CD4-positive, alpha-beta memory T cell (primary cell): ENCODE measurements at regions of chr1 and their contacts with region 1.

Region 1: DNA sequence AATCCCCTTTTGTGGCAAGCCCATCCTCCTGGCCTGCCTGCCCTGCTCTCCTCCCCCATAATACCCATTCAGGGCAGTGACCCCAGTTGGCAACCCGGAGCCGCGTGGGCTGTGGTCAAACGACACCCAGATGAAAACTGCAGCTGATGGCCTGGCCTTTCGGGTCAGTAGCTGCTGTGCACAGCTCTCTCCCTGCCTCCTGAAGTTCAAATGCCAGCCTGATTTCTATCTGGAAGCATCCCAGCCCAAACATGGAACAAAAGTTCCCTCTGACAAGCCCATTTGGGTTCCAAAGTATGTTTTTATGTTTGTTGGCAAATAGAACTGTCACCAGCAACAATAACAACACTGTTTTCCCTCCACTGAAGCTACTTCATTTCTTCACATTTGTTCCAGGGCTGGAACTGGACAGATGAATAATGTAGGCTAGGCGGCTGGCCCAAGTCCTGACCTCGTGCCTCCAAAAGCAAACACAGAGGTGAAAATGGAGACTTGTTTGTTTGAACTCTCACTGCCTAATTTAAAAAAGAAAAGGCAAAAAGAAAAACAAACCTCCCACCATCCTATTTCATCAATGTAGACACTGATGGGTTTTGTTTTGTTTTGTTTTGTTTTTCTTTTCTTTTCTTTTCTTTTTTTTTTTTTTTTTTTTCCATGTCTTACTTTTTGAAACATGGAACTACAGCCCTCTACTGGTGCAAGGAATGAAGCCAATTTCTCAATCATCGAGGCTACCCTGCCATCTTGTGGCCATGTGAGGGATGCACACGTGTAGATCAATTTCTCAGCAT is 179.0 kb downstream of the ADSS2 start:
- DNase-seq: peak; percentile 65 to 76 (median 74)
- H3K4me3 ChIP-seq: no peak overlapping the region
- H3K4me3 Mint-ChIP-seq: no peak overlapping the region
- H3K27ac ChIP-seq: no peak overlapping the region
- H3K27ac Mint-ChIP-seq: no peak overlapping the region
- H3K4me1 ChIP-seq: no peaks in the 10 kb centered on the region
- H3K4me1 Mint-ChIP-seq: peaks cover 0 to 3% (median 1%) of the 10 kb centered on the region in 4 donors
- H3K27me3 ChIP-seq: no peaks in the 10 kb centered on the region
- H3K27me3 Mint-ChIP-seq: peaks cover 0 to 2% of the 10 kb centered on the region in 2 donors

Region 2: GRCh38 chr1:243343970-243344937 is 928.4 kb before region 1 on chr1:
- CTCF ChIA-PET with region 1: interaction called, 65 read pairs
- POLR2A ChIA-PET with region 1: interaction called, 3 read pairs
- intact Hi-C with region 1: loop called (anchors 1 kb)
- DNase-seq: peak in 4 of 5 donors; percentile 47 to 52 (median 50)
- H3K4me3 ChIP-seq: no peak overlapping the region
- H3K4me3 Mint-ChIP-seq: no peak overlapping the region
- H3K27ac ChIP-seq: no peak overlapping the region
- H3K27ac Mint-ChIP-seq: no peak overlapping the region
- H3K4me1 ChIP-seq: no peaks in the 10 kb centered on the region
- H3K4me1 Mint-ChIP-seq: peaks cover 0 to 4% (median 3%) of the 10 kb centered on the region in 4 donors
- H3K27me3 ChIP-seq: no peaks in the 10 kb centered on the region
- H3K27me3 Mint-ChIP-seq: no peaks in the 10 kb centered on the region

Region 3: DNA sequence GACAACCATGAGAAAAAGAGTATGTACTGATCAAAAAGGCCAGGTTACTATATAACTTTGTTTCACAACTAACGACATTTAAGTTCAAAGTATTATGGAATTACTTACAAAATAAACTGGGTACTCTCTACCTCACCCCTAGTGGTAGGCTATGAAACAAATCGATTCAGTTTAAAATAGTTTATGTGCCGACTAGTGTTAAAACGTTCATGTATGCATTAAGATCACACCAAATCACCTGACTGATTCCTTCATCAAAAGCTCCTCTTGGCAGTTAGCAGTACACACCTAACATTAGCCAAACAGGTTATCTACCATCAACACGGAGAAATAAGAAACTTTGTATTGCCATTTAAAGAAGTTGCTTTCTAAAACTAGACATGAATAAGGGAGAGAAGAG is 559.7 kb before region 1 on chr1:
- CTCF ChIA-PET with region 1: interaction called, 15 read pairs
- POLR2A ChIA-PET with region 1: no interaction called
- intact Hi-C with region 1: loop called (anchors 1 kb)
- DNase-seq: no peak
- H3K4me3 ChIP-seq: no peak overlapping the region
- H3K4me3 Mint-ChIP-seq: no peak overlapping the region
- H3K27ac ChIP-seq: no peak overlapping the region
- H3K27ac Mint-ChIP-seq: no peak overlapping the region
- H3K4me1 ChIP-seq: peaks cover 7% of the 10 kb centered on the region
- H3K4me1 Mint-ChIP-seq: peaks cover 38 to 57% (median 48%) of the 10 kb centered on the region in 4 donors
- H3K27me3 ChIP-seq: no peaks in the 10 kb centered on the region
- H3K27me3 Mint-ChIP-seq: no peaks in the 10 kb centered on the region

Region 4: GRCh38 chr1:243842978-243843511 is 429.6 kb before region 1 on chr1:
- CTCF ChIA-PET with region 1: no interaction called
- POLR2A ChIA-PET with region 1: no interaction called
- intact Hi-C with region 1: loop called (anchors 5 kb)
- DNase-seq: peak in 2 of 5 donors; percentile 20 to 61
- H3K4me3 ChIP-seq: no peak overlapping the region
- H3K4me3 Mint-ChIP-seq: peak overlapping the region; percentile 56 to 85 (median 74)
- H3K27ac ChIP-seq: peak overlapping the region; percentile 26
- H3K27ac Mint-ChIP-seq: peak overlapping the region; percentile 67 to 97 (median 87)
- H3K4me1 ChIP-seq: peaks cover 74% of the 10 kb centered on the region
- H3K4me1 Mint-ChIP-seq: peaks cover 38 to 71% (median 61%) of the 10 kb centered on the region in 4 donors
- H3K27me3 ChIP-seq: no peaks in the 10 kb centered on the region
- H3K27me3 Mint-ChIP-seq: no peaks in the 10 kb centered on the region

Region 5: GRCh38 chr1:244047621-244048471 is 224.8 kb before region 1 on chr1:
- CTCF ChIA-PET with region 1: interaction called, 3 read pairs
- POLR2A ChIA-PET with region 1: no interaction called
- intact Hi-C with region 1: loop called (anchors 1 kb)
- DNase-seq: peak; percentile 93 to 99 (median 97)
- H3K4me3 ChIP-seq: peak overlapping the region; percentile 77 to 99
- H3K4me3 Mint-ChIP-seq: peak overlapping the region; percentile 84 to 98 (median 95)
- H3K27ac ChIP-seq: peak overlapping the region; percentile 94
- H3K27ac Mint-ChIP-seq: peak overlapping the region; percentile 91 to 100 (median 98)
- H3K4me1 ChIP-seq: peaks cover 47% of the 10 kb centered on the region
- H3K4me1 Mint-ChIP-seq: peaks cover 21 to 28% (median 27%) of the 10 kb centered on the region in 4 donors
- H3K27me3 ChIP-seq: no peaks in the 10 kb centered on the region
- H3K27me3 Mint-ChIP-seq: peaks cover 0 to 2% of the 10 kb centered on the region in 2 donors